GM13976 (cell line): ENCODE measurements at regions of chr12 and their contacts with region 1.

Region 1: GRCh38 chr12:46209914-46210872 is 58.6 kb downstream of the SLC38A1 start:
- DNase-seq: no peak
- CTCF ChIP-seq: no peak

Region 2: DNA sequence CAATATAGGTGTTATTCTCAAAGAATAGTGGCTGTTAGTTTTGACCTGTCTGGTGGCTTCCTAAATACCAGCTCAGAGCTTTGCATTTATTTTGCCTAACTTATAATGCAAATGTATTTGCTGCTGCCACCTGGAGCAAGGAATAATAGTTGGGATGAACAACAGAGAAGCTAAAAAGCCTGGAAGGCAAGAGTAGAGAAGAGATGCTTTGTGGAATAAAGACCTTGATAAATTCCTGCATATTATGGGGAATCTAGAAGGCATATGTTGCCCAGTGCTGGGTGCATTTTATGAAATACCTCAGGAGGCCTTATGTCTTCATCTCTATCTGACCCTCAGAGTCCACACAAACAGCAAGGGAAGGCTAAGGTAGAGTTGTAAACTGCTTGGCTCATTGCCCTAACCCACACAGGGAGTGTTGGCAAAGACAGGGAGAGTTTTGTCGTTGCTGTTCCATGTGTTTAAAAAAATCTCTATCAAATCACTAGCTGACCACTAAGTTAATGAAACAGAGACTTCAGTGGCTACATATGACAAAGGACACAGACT is 166.1 kb before region 1 on chr12:
- in situ Hi-C with region 1: no loop called
- DNase-seq: no peak
- CTCF ChIP-seq: no peak

Region 3: DNA sequence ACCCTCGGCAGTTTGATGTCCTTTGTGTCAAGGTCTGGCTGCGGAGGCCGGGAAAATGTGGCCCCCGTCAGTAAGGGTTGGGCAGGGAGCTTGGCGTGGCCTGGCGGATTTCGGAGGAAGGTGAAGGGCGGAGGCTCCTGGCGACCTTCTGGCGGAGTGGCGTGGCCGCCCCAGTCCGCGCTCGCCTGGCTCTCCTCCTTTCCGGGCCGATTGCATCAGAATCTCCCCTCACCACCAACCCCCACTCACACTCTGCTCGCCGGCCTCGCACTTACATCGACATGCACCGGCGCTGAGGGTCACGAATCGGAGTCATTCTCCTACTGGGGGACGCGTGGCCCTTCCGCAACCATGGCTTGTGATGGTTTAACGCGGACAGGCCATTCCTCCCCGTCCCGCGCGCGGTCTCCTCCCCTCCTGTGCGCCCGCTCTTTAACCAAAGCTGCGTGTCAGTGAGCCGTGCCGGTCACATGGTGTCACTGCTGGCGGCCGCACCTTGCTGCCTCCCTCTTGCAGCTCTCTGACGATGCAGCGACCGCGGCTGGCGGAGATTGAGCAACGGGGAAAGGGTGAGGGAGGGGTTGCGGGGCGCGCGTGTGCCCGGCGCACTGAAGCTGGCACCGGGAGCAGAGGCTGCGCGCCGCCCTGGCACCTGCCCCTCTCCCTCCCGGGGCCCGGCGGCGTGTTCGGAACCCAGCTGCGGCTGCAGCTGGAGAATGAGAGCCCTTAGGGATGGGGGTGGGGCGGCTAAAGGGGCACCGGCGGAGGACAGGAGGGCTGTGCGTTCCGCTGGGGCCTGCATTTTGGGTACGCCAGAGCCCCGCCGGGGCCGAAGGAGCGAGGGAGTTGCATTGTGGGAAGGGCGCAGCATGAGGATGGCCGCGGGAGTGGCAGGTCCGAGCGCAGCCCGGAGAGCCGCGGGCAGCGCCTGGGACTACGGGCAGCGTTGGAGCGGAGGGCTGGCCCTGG is 58.7 kb after region 1 on chr12 and contains the start of gene SLC38A1:
- in situ Hi-C with region 1: loop called (anchors 10 kb)
- DNase-seq: peak; percentile 87
- CTCF ChIP-seq: peak; percentile 6